ENCODE measurements at regions of chr5 and their contacts with region 1.

Region 1: GRCh38 chr5:53478411-53479044 is 1.9 kb upstream of the FST start:
- DNase-seq: peak; percentile 69
- H3K4me3 Mint-ChIP-seq: peak overlapping the region; percentile 79
- H3K27ac Mint-ChIP-seq: no peak overlapping the region
- H3K4me1 Mint-ChIP-seq: peaks cover 23% of the 10 kb centered on the region
- H3K27me3 Mint-ChIP-seq: no peaks in the 10 kb centered on the region
- CTCF ChIP-seq: peak; percentile 60

Region 2: DNA sequence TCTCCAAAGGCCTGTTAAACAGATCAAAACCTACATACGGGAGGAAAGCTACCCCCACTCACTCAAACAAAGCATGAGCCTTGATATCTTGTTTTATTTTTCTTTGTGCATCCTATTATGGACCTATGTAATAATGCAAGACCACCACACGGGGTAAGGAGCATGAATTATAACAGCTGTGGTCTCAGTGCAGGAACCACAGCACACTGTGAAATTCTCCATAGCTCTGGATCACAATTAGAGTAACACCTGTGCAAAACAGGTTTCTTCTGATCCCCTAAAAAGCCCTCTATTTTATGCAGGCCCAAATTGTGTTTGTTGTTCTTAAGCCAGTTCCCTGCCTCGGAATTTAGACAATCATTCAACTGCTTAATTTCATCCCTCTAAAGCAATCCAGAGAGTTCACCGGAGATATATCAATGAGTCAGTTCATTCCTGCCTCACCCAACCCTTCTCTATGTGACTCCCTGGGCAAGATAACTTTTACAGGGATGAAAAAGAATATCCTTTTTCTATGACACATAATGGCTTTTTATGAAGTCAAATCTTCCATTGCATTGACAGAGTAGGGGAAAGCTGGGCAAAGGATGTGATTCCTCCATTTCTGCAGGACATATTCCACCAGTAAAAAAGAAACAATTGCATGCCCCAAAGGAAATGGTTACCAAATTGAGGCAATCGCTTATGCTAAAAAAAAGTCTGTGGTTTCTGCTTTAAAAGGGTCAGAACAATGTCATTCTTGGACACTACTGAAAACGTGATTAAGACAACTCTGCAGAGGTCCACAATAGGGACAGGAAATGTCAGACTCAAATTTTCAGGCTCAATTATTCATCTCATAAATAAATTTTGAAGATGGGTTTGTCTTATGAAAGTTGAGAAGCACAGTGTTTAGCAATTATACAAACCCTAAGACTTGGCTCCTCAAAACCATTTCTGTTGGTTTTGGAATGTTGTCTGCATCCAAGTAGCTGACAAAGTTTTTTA is 39.7 kb before region 1 on chr5:
- CTCF ChIA-PET with region 1: interaction called, 6 read pairs
- POLR2A ChIA-PET with region 1: no interaction called
- intact Hi-C with region 1: loop called (anchors 5 kb)
- DNase-seq: peak; percentile 20
- H3K4me3 Mint-ChIP-seq: no peak overlapping the region
- H3K27ac Mint-ChIP-seq: no peak overlapping the region
- H3K4me1 Mint-ChIP-seq: peaks cover 9% of the 10 kb centered on the region
- H3K27me3 Mint-ChIP-seq: no peaks in the 10 kb centered on the region
- CTCF ChIP-seq: no peak

Region 3: GRCh38 chr5:53645078-53645477 is 166.6 kb after region 1 on chr5:
- CTCF ChIA-PET with region 1: no interaction called
- POLR2A ChIA-PET with region 1: no interaction called
- intact Hi-C with region 1: no loop called
- DNase-seq: no peak
- H3K4me3 Mint-ChIP-seq: no peak overlapping the region
- H3K27ac Mint-ChIP-seq: no peak overlapping the region
- H3K4me1 Mint-ChIP-seq: peaks cover 10% of the 10 kb centered on the region
- H3K27me3 Mint-ChIP-seq: no peaks in the 10 kb centered on the region
- CTCF ChIP-seq: no peak

Region 4: GRCh38 chr5:53714322-53714941 is 235.9 kb after region 1 on chr5:
- CTCF ChIA-PET with region 1: no interaction called
- POLR2A ChIA-PET with region 1: no interaction called
- intact Hi-C with region 1: no loop called
- DNase-seq: no peak
- H3K4me3 Mint-ChIP-seq: no peak overlapping the region
- H3K27ac Mint-ChIP-seq: no peak overlapping the region
- H3K4me1 Mint-ChIP-seq: no peaks in the 10 kb centered on the region
- H3K27me3 Mint-ChIP-seq: peaks cover 10% of the 10 kb centered on the region
- CTCF ChIP-seq: no peak

Region 5: GRCh38 chr5:53991942-53992341 is 513.4 kb after region 1 on chr5:
- CTCF ChIA-PET with region 1: no interaction called
- POLR2A ChIA-PET with region 1: no interaction called
- intact Hi-C with region 1: loop called (anchors 5 kb)
- DNase-seq: peak; percentile 23
- H3K4me3 Mint-ChIP-seq: no peak overlapping the region
- H3K27ac Mint-ChIP-seq: no peak overlapping the region
- H3K4me1 Mint-ChIP-seq: peaks cover 7% of the 10 kb centered on the region
- H3K27me3 Mint-ChIP-seq: no peaks in the 10 kb centered on the region
- CTCF ChIP-seq: peak; percentile 22

Region 6: GRCh38 chr5:54217826-54218503 is 739.4 kb after region 1 on chr5:
- CTCF ChIA-PET with region 1: interaction called, 9 read pairs
- POLR2A ChIA-PET with region 1: interaction called, 3 read pairs
- intact Hi-C with region 1: loop called (anchors 1 kb)
- DNase-seq: peak; percentile 71
- H3K4me3 Mint-ChIP-seq: no peak overlapping the region
- H3K27ac Mint-ChIP-seq: no peak overlapping the region
- H3K4me1 Mint-ChIP-seq: no peaks in the 10 kb centered on the region
- H3K27me3 Mint-ChIP-seq: no peaks in the 10 kb centered on the region
- CTCF ChIP-seq: peak; percentile 56

Measured in MCF 10A (cell line).